Ascending aorta (tissue), 2 donors: ENCODE measurements at regions of chr10 and their contacts with region 1.

Region 1: GRCh38 chr10:69408318-69409175 is 8.2 kb downstream of the TACR2 start:
- DNase-seq: peak; percentile 77 to 96
- H3K4me3 ChIP-seq: peak overlapping the region; percentile 39 to 62
- H3K27ac ChIP-seq: peak overlapping the region; percentile 91 to 95
- H3K4me1 ChIP-seq: peaks cover 5 to 24% of the 10 kb centered on the region in 2 donors
- H3K27me3 ChIP-seq: no peaks in the 10 kb centered on the region
- CTCF ChIP-seq: peak; percentile 63 to 84 (median 81)

Region 2: GRCh38 chr10:69004821-69005220 is 403.7 kb before region 1 on chr10:
- intact Hi-C with region 1: no loop called
- DNase-seq: no peak
- H3K4me3 ChIP-seq: no peak overlapping the region
- H3K27ac ChIP-seq: no peak overlapping the region
- H3K4me1 ChIP-seq: peaks cover 0 to 4% of the 10 kb centered on the region in 2 donors
- H3K27me3 ChIP-seq: no peaks in the 10 kb centered on the region
- CTCF ChIP-seq: peak; percentile 34 to 50 (median 34)

Region 3: GRCh38 chr10:69123747-69124562 is 284.6 kb before region 1 on chr10 and contains the start of gene VPS26A:
- intact Hi-C with region 1: loop called (anchors 1 kb)
- DNase-seq: peak; percentile 96 to 99
- H3K4me3 ChIP-seq: peak within 1 kb of the TSS; percentile 92 to 96
- H3K27ac ChIP-seq: peak within 1 kb of the TSS; percentile 98 to 99
- H3K4me1 ChIP-seq: peaks cover 0 to 17% of the 10 kb centered on the region in 2 donors
- H3K27me3 ChIP-seq: no peaks in the 10 kb centered on the region
- CTCF ChIP-seq: peak in 1 of 3 experiments; percentile 37
- total RNA-seq, gene VPS26A: 26.0 TPM

Region 4: GRCh38 chr10:69237528-69238159 is 170.9 kb before region 1 on chr10:
- intact Hi-C with region 1: loop called (anchors 1 kb)
- DNase-seq: peak; percentile 40 to 90
- H3K4me3 ChIP-seq: no peak overlapping the region
- H3K27ac ChIP-seq: no peak overlapping the region
- H3K4me1 ChIP-seq: peaks cover 3 to 13% of the 10 kb centered on the region in 2 donors
- H3K27me3 ChIP-seq: no peaks in the 10 kb centered on the region
- CTCF ChIP-seq: peak; percentile 89 to 95 (median 91)

Region 5: GRCh38 chr10:69360485-69361324 is 47.8 kb before region 1 on chr10:
- intact Hi-C with region 1: loop called (anchors 1 kb)
- DNase-seq: peak; percentile 71 to 93
- H3K4me3 ChIP-seq: peak overlapping the region; percentile 6 to 41
- H3K27ac ChIP-seq: peak overlapping the region; percentile 95 to 96
- H3K4me1 ChIP-seq: peaks cover 25 to 58% of the 10 kb centered on the region in 2 donors
- H3K27me3 ChIP-seq: no peaks in the 10 kb centered on the region
- CTCF ChIP-seq: no peak

Region 6: DNA sequence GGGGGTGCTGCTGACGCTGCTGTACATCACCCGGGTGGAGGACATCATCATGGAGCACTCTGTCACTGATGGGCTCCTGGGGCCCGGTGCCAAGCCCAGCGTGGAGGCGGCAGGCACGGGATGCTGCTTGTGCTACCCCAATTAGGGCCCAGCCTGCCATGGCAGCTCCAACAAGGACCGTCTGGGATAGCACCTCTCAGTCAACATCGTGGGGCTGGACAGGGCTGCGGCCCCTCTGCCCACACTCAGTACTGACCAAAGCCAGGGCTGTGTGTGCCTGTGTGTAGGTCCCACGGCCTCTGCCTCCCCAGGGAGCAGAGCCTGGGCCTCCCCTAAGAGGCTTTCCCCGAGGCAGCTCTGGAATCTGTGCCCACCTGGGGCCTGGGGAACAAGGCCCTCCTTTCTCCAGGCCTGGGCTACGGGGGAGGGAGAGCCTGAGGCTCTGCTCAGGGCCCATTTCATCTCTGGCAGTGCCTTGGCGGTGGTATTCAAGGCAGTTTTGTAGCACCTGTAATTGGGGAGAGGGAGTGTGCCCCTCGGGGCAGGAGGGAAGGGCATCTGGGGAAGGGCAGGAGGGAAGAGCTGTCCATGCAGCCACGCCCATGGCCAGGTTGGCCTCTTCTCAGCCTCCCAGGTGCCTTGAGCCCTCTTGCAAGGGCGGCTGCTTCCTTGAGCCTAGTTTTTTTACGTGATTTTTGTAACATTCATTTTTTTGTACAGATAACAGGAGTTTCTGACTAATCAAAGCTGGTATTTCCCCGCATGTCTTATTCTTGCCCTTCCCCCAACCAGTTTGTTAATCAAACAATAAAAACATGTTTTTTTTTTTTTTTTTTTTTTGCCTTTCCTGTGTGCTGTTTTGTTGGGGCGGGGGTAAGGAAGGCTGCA is 98.5 kb after region 1 on chr10:
- intact Hi-C with region 1: loop called (anchors 5 kb)
- DNase-seq: no peak
- H3K4me3 ChIP-seq: no peak overlapping the region
- H3K27ac ChIP-seq: no peak overlapping the region
- H3K4me1 ChIP-seq: peaks cover 0 to 4% of the 10 kb centered on the region in 2 donors
- H3K27me3 ChIP-seq: no peaks in the 10 kb centered on the region
- CTCF ChIP-seq: no peak

Region 7: GRCh38 chr10:69716711-69717560 is 308.4 kb after region 1 on chr10:
- intact Hi-C with region 1: loop called (anchors 5 kb)
- DNase-seq: no peak
- H3K4me3 ChIP-seq: no peak overlapping the region
- H3K27ac ChIP-seq: peak overlapping the region; percentile 52 to 82
- H3K4me1 ChIP-seq: peaks cover 11 to 14% of the 10 kb centered on the region in 2 donors
- H3K27me3 ChIP-seq: no peaks in the 10 kb centered on the region
- CTCF ChIP-seq: peak; percentile 38 to 70 (median 50)

Region 8: DNA sequence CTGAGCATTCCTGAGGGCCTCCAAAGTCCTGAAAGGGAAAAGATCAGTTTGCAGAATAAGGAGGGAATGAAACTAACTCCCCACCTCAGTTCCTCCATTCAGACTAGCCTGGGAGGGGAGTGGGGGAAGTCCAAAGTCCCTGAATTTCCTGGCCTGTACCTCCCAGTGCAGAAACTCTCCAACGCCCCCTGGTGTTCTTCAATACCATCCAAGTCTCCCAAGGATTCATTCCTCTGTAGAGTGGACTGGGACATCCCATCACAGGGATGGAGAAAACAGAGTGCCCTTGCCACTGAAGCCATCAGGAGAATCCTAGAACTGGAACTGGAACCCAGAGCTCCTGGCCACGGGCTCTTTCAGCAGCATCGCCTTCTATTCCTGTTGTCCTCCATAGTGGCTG is 391.6 kb after region 1 on chr10:
- intact Hi-C with region 1: no loop called
- DNase-seq: peak in 1 of 2 donors; percentile 79
- H3K4me3 ChIP-seq: no peak overlapping the region
- H3K27ac ChIP-seq: no peak overlapping the region
- H3K4me1 ChIP-seq: peaks cover 0 to 7% of the 10 kb centered on the region in 2 donors
- H3K27me3 ChIP-seq: no peaks in the 10 kb centered on the region
- CTCF ChIP-seq: peak; percentile 51 to 76 (median 65)

Region 9: DNA sequence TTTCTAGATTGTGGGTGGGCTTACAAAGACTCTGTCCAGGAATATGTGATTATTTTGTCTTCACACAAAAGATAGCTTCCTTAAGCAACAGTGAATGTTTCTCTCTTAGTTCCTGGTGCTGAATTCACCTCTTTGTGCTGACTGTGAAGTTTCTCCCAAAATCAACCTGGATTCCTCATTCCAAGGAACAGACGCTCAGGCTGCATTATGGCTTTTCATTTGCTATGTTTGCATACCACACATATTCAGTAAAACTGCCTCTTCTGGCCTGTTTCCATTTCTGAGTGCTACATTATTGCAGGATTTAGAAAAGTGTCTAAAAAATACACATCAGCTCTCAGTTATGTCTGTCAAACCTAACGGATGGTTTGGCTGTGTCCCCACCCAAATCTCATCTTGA is 665.6 kb after region 1 on chr10:
- intact Hi-C with region 1: no loop called
- DNase-seq: no peak
- H3K4me3 ChIP-seq: no peak overlapping the region
- H3K27ac ChIP-seq: no peak overlapping the region
- H3K4me1 ChIP-seq: no peaks in the 10 kb centered on the region
- H3K27me3 ChIP-seq: no peaks in the 10 kb centered on the region
- CTCF ChIP-seq: no peak